Breast epithelium (tissue), 4 donors: ENCODE measurements at regions of chr5 and their contacts with region 1.

Region 1: GRCh38 chr5:108606185-108606584 is 141.5 kb upstream of the FER start:
- DNase-seq: no peak
- H3K4me3 ChIP-seq: no peak overlapping the region
- H3K27ac ChIP-seq: no peak overlapping the region
- H3K4me1 ChIP-seq: no peaks in the 10 kb centered on the region
- H3K27me3 ChIP-seq: no peaks in the 10 kb centered on the region
- CTCF ChIP-seq: no peak
- POLR2A ChIP-seq: no peak

Region 2: GRCh38 chr5:107580889-107581820 is 1025.0 kb before region 1 on chr5:
- intact Hi-C with region 1: no loop called
- DNase-seq: no peak
- H3K4me3 ChIP-seq: no peak overlapping the region
- H3K27ac ChIP-seq: peak overlapping the region; percentile 0 to 65
- H3K4me1 ChIP-seq: no peaks in the 10 kb centered on the region
- H3K27me3 ChIP-seq: no peaks in the 10 kb centered on the region
- CTCF ChIP-seq: no peak
- POLR2A ChIP-seq: no peak

Region 3: DNA sequence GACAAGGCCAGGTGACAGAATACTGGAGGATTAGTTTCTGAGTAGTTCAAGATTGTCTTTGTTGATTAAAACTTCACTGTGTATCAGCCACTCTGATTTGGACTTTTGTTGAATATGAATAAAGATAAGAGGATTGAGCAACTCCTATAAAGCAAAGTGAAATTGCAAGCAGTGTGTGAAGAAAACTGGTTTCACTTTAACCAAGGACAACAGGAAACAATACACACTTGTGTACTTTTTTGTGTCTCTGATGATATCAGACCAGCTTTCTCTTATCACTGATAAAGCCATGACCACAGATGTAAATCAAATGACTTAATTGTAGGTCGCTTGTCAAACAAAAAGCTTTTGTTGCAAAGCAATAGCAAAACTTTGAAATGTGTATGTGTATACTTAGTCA is 410.1 kb after region 1 on chr5:
- intact Hi-C with region 1: loop called (anchors 5 kb)
- DNase-seq: no peak
- H3K4me3 ChIP-seq: no peak overlapping the region
- H3K27ac ChIP-seq: no peak overlapping the region
- H3K4me1 ChIP-seq: no peaks in the 10 kb centered on the region
- H3K27me3 ChIP-seq: no peaks in the 10 kb centered on the region
- CTCF ChIP-seq: no peak
- POLR2A ChIP-seq: no peak

Region 4: GRCh38 chr5:109630093-109630492 is 1023.9 kb after region 1 on chr5:
- intact Hi-C with region 1: loop called (anchors 5 kb)
- DNase-seq: no peak
- H3K4me3 ChIP-seq: no peak overlapping the region
- H3K27ac ChIP-seq: no peak overlapping the region
- H3K4me1 ChIP-seq: no peaks in the 10 kb centered on the region
- H3K27me3 ChIP-seq: no peaks in the 10 kb centered on the region
- CTCF ChIP-seq: no peak
- POLR2A ChIP-seq: no peak